ENCODE measurements at regions of chr2 and their contacts with region 1.

Region 1: GRCh38 chr2:121649596-121650314 is 493 bp upstream of the CLASP1 start:
- DNase-seq: peak; percentile 99
- H3K4me3 Mint-ChIP-seq: peak overlapping the region; percentile 91
- H3K27ac Mint-ChIP-seq: peak overlapping the region; percentile 100
- H3K4me1 Mint-ChIP-seq: peaks cover 53% of the 10 kb centered on the region
- H3K27me3 Mint-ChIP-seq: no peaks in the 10 kb centered on the region

Region 2: GRCh38 chr2:121400201-121400600 is 249.6 kb before region 1 on chr2:
- intact Hi-C with region 1: loop called (anchors 2 kb)
- DNase-seq: no peak
- H3K4me3 Mint-ChIP-seq: no peak overlapping the region
- H3K27ac Mint-ChIP-seq: no peak overlapping the region
- H3K4me1 Mint-ChIP-seq: peaks cover 2% of the 10 kb centered on the region
- H3K27me3 Mint-ChIP-seq: no peaks in the 10 kb centered on the region

Region 3: GRCh38 chr2:121596221-121597080 is 53.3 kb before region 1 on chr2:
- intact Hi-C with region 1: loop called (anchors 1 kb)
- DNase-seq: peak; percentile 70
- H3K4me3 Mint-ChIP-seq: peak overlapping the region; percentile 67
- H3K27ac Mint-ChIP-seq: peak overlapping the region; percentile 88
- H3K4me1 Mint-ChIP-seq: peaks cover 41% of the 10 kb centered on the region
- H3K27me3 Mint-ChIP-seq: no peaks in the 10 kb centered on the region

Region 4: GRCh38 chr2:121722479-121722878 is 72.7 kb after region 1 on chr2:
- intact Hi-C with region 1: loop called (anchors 2 kb)
- DNase-seq: no peak
- H3K4me3 Mint-ChIP-seq: peak overlapping the region; percentile 3
- H3K27ac Mint-ChIP-seq: peak overlapping the region; percentile 82
- H3K4me1 Mint-ChIP-seq: peaks cover 15% of the 10 kb centered on the region
- H3K27me3 Mint-ChIP-seq: no peaks in the 10 kb centered on the region

Region 5: GRCh38 chr2:121755236-121756111 is 105.7 kb after region 1 on chr2 and contains the start of gene TSN:
- intact Hi-C with region 1: loop called (anchors 1 kb)
- DNase-seq: peak; percentile 99
- H3K4me3 Mint-ChIP-seq: peak within 1 kb of the TSS; percentile 96
- H3K27ac Mint-ChIP-seq: peak within 1 kb of the TSS; percentile 93
- H3K4me1 Mint-ChIP-seq: peaks cover 25% of the 10 kb centered on the region
- H3K27me3 Mint-ChIP-seq: no peaks in the 10 kb centered on the region
- total RNA-seq, gene TSN: 72.6 and 76.5 TPM in 2 replicates